ENCODE measurements at regions of chr19 and their contacts with region 1.

Region 1: DNA sequence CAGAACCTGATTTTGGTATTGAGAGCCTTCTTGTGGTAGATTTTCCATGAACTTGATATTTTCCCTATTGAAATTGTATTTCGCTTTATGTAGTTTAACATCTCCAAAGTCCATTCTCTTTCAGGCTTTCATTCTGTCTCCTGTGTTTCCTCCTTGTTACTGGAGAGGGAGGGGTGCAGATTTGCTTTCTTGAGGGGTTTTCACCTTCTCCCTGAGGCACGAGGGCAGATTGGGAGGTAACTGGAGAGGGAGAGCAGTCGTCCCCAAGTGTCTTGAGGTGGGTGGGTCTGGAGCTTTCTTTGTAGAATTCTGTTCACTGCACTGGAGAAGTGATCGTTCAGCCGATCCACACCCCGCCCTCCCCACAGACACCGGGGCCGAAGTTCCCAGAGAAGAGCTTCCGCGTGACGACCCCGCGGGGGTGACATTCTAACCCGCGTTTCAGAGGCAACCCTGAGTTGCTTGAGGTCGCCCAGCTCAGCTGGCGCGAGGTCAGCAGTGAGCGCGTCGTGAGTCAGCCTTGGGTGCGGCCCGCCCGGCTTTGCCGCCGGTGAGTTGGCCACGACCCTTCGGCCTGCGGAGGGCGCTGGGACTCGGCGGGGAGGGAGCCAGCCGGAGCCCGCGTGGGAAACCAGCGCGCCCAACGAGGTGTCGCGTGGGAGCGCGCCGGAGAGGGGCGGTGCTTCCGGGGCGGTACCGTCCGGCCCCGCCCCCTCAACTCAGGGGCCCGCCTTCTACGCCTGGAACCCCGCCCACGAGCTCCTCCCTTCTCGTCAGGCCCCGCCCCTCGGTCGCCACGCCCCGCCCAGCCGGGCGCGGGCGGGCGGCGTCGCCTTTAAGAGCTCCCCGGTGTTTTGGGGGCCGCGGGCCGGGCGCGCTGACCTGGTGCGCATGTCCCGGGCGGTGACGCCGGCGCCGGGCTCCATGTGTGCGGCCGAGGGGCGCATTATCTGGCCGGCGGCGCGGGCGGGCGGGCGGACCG is at the start of gene GATAD2A:
- DNase-seq: peak; percentile 92

Region 2: GRCh38 chr19:19342756-19343322 is 62.3 kb before region 1 on chr19:
- CTCF ChIA-PET with region 1: no interaction called
- POLR2A ChIA-PET with region 1: no interaction called
- DNase-seq: peak; percentile 86

Region 3: DNA sequence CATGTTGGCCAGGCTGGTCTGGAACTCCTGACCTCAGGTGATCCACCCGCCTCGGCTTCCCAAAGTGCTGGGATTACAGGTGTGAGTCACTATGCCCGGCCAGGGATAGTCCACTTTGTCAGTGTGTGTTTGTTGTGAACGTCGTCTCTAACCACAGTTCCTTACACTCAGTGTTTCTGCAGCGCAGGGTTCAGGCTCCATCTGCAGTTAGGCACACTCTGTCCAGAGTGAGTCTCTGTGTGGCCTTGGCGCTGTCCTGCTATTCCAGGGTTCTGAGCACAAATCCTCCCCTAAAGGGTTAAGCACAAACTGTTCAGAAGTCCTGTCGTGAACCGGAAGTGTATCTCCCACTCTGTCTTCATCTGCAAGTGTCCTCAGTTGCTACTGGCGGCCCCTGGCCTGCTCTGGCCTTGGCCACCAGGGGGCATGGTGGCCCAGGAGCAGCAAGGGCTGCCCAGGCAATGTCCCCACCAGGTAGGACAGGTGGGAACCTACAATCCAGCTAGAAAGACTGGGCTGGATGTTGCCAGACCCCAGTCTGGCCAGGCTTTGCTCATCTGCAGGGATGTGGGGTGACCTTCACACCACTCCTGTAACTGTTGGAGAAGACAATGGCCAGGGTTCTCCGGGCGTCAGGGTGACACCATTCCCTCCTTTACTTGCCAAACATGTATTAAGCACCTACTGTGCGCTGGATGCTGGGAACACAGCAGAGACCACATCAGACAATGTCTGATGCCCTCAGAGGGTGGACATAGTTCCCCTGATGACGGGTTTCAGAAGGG is 38.4 kb before region 1 on chr19:
- CTCF ChIA-PET with region 1: no interaction called
- POLR2A ChIA-PET with region 1: interaction called, 21 read pairs
- DNase-seq: peak; percentile 80

Region 4: DNA sequence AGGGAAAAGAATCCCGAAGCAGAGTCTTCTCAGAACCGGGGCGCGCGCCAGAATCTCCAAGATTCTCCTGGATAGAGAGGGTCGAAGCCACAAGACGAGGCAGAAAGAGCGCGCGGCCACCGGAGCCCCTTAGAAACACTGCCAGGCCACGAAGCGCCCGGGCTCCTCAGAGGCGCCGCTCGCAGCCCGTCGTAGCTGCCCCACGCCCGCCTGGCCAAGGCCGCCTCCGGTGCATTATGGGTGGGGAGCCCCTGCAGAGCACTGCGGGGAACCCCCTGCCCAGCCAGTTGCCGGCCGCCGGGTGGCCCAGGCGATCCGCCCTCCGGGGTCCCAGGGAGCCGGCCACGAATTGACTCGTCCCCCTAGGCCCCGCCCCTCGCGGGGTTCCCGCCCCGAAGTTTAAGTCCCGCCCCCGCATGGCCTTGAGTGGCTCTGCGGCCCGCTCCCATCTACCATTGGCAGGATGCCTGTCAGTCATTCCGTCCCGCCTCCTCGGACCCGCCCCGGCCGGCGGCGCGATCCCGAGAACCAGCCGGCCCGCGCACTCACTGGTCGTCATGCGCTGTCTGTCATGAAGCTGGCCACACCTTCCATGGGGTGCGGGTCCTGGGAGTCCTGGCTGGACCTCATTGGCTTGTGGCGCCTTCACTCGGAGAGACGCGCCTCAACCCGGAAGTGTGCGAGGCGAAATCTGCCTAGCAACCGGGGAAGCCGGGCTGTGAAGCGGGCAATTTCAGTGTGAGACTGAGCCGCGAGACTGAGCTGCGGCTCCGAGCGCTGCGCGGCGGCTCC is 19.9 kb before region 1 on chr19:
- CTCF ChIA-PET with region 1: interaction called, 3 read pairs
- POLR2A ChIA-PET with region 1: interaction called, 21 read pairs
- DNase-seq: peak; percentile 96

Region 5: DNA sequence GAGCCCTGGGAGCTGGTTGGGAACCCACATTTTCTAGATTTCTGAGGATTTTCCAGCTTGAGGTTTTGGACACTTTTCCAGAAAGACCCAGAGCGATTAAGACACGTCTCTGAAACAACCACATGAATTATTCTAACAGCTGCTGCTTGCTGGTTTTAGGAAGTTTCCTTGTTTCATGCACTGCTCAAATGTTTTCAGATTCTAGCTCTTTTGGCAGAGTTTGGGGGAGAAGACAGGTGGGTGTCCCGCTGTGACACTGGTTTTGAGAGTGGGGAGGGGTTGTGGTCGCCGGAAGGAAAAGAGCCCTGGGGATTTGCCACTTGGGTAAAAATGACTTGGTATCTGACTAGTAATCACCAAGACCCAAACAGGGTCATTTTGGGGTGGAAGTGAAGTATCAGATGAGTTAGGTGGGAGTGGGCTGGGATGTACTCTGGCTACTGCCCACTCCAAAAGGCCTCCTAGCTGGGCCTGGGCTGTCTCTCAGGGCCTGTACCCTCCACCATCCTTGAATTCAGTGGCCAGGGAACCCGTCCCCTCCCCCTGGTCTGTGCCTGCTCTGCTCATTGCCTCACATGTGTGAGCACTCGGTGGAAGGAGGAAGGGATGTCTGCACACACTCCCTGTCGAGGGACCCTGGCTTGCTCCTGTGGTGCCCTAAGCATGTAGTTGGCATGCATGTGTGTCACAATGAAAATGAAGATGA is 13.5 kb after region 1 on chr19:
- CTCF ChIA-PET with region 1: no interaction called
- POLR2A ChIA-PET with region 1: interaction called, 12 read pairs
- DNase-seq: no peak

Measured in HEK293T (cell line).